ENCODE measurements at regions of chr15 and their contacts with region 1.

Region 1: GRCh38 chr15:39624806-39625205 is 43.9 kb downstream of the THBS1 start:
- DNase-seq: peak; percentile 39 to 91 (median 58)
- ATAC-seq: peak; percentile 54
- H3K4me3 ChIP-seq: no peak overlapping the region
- H3K4me3 Mint-ChIP-seq: peak overlapping the region; percentile 76
- H3K27ac ChIP-seq: peak overlapping the region; percentile 70 to 80
- H3K27ac Mint-ChIP-seq: peak overlapping the region; percentile 91
- H3K4me1 ChIP-seq: peaks cover 78% of the 10 kb centered on the region
- H3K4me1 Mint-ChIP-seq: peaks cover 55% of the 10 kb centered on the region
- H3K27me3 ChIP-seq: no peaks in the 10 kb centered on the region
- H3K27me3 Mint-ChIP-seq: no peaks in the 10 kb centered on the region
- CTCF ChIP-seq: no peak

Region 2: DNA sequence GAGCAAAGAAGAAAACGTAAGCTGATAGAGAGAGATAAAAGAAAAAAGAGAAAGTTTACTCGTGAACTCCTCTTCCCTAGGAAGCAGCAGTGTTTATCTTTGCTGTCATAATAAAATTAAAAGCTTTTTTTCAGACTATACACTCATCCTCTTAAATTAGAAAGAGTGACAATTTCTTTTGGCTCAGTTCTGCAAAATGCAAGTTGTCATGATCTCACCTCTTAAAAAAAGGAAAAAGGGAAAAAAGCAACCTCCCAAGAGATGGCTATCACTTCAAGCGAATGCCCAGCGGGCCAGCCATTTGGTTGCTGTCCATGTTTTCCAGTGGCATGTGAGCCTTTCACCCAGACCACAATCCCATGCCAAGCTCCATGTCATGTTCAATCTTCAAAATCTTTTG is 51.0 kb before region 1 on chr15:
- CTCF ChIA-PET with region 1: no interaction called
- POLR2A ChIA-PET with region 1: no interaction called
- intact Hi-C with region 1: no loop called
- DNase-seq: no peak
- ATAC-seq: no peak
- H3K4me3 ChIP-seq: no peak overlapping the region
- H3K4me3 Mint-ChIP-seq: no peak overlapping the region
- H3K27ac ChIP-seq: no peak overlapping the region
- H3K27ac Mint-ChIP-seq: no peak overlapping the region
- H3K4me1 ChIP-seq: no peaks in the 10 kb centered on the region
- H3K4me1 Mint-ChIP-seq: no peaks in the 10 kb centered on the region
- H3K27me3 ChIP-seq: peaks cover 2 to 10% of the 10 kb centered on the region in 2 experiments
- H3K27me3 Mint-ChIP-seq: peaks cover 58% of the 10 kb centered on the region
- CTCF ChIP-seq: no peak

Region 3: DNA sequence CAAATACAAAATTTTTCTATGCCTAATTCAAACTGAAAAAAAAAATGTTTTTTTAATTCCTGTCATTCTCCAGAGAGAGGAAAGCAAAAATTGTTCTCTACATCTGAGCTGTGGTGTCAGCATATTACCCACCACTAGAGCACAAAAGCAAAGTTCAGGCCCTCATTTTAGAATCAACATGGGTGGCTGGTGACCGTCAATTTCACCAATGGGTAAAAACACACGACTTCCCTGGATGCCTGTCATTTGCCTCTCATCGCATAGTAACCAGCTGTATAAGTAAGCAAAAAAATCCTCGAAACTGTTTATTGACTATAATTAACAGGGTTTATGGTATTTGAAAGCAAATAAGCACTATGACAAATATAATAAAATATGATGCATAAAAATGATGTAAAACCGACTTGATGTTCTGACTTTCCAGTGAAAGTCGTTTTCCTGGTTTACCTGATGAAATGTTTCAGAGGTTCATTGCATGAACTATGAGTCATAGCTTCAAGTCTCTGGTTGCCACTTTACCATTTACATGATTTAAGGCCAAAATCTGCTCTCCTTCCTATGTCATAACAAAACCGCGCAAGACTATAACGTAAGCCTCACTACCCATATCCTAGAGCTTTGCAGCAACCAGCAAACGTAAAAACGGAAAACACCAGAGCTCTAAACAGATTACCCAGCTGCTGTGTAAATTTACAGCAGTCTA is 16.5 kb after region 1 on chr15:
- CTCF ChIA-PET with region 1: interaction called, 9 read pairs
- POLR2A ChIA-PET with region 1: interaction called, 9 read pairs
- intact Hi-C with region 1: loop called in 1 of 2 experiments (anchors 1 kb)
- DNase-seq: peak in 3 of 14 experiments; percentile 55 to 76 (median 65)
- ATAC-seq: peak; percentile 82
- H3K4me3 ChIP-seq: no peak overlapping the region
- H3K4me3 Mint-ChIP-seq: no peak overlapping the region
- H3K27ac ChIP-seq: no peak overlapping the region
- H3K27ac Mint-ChIP-seq: peak overlapping the region; percentile 28
- H3K4me1 ChIP-seq: peaks cover 5% of the 10 kb centered on the region
- H3K4me1 Mint-ChIP-seq: peaks cover 5% of the 10 kb centered on the region
- H3K27me3 ChIP-seq: no peaks in the 10 kb centered on the region
- H3K27me3 Mint-ChIP-seq: peaks cover 9% of the 10 kb centered on the region
- CTCF ChIP-seq: no peak